ENCODE measurements at regions of chr19 and their contacts with region 1.

Region 1: DNA sequence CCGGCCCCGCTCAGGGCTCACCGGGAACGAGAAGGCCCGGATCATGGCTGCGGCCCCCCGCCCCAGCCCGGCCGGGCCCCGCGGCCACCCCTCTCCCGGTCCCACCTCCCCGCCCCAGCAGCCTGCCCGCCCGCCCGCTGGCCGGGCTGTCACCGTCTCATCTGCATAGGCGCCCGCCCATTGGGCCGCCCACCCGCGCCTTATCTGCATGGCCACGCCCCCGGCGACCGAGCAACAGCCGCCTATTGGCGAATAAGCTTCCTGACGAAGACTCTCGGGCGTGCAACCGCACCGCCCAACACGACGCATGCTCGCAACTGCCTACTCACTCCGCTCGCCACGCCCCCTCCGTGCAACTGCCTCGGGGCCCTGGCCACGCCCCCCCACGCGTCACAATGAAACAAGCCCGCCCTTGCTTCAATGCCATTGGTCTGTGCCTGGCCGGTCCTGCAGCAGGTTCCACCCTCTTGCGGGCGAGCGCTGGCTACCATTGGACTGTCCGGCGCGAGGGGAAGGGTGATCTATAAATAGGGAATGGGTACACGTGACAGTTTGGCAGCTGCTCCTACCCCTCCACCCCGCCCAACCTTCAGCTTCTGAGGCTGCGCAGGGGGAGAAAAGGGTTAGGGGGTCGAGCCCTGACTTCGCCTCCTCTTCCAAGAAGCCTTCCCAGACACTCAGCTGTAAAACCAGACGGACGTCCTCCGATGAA is at the start of gene DACT3:
- DNase-seq: peak; percentile 96
- H3K4me3 ChIP-seq: peak within 1 kb of the TSS; percentile 69 to 88
- H3K27ac ChIP-seq: peak within 1 kb of the TSS; percentile 52 to 84; a peak in 3 of 4 replicates
- H3K4me1 ChIP-seq: peaks cover 0 to 18% of the 10 kb centered on the region in 2 experiments; a peak in 1 of 4 replicates
- H3K27me3 ChIP-seq: no peaks in the 10 kb centered on the region
- CTCF ChIP-seq: no peak
- EP300 ChIP-seq: no peak
- RAD21 ChIP-seq: no peak
- polyA plus RNA-seq, gene DACT3: 9.5 and 10.6 TPM in 2 replicates

Region 2: DNA sequence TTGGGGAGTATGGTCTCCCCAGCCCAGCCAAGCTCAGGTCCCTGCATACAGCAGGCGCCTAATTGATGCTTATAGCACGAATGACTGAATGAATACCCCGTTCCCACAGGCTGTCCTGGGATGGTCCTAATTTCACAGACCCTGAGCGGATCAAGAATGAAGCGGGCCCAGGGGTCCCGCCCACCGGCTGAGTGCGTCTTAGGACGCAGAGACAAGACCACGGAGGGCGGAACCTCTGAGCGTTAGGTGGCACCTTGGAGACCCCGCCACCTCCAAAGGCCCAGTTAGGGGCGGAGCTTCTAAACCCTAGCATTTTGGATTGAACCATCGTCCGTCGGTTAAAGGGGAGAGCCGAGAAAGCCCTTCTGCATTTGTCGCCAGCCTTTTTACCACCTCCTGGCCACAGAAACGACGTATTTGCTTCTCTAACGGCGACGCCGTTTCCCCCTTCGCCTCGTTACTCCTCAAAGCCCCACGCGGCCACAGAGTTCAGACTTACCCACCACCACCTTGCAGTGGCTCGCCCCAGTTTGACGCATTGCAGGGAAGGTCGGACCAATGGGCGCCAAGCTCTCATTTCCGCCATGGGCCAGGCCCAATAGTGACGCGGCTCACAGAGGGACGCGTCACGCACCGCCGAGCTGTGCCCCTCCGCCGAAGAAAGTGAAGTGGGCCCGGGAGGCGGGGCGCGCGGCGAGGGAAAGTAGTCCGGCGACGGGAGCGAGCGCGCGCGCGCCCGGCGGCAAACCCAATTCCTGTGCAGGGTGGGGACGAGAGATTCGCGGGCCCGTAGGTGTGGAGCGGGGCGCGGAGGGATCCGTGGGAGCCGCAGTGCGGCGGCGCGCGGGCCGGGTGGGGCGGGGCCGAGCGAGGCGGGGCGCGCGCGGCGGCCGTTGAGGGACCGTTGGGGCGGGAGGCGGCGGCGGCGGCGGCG is 60.5 kb before region 1 on chr19:
- CTCF ChIA-PET with region 1: interaction called, 471 read pairs
- POLR2A ChIA-PET with region 1: interaction called, 8 read pairs
- DNase-seq: peak; percentile 96
- H3K4me3 ChIP-seq: peak overlapping the region; percentile 98 to 100
- H3K27ac ChIP-seq: peak overlapping the region; percentile 94 to 100
- H3K4me1 ChIP-seq: peaks cover 19 to 31% of the 10 kb centered on the region in 2 experiments
- H3K27me3 ChIP-seq: no peaks in the 10 kb centered on the region
- CTCF ChIP-seq: no peak
- EP300 ChIP-seq: peak in 1 of 2 experiments; percentile 65; a peak in 1 of 4 replicates
- RAD21 ChIP-seq: no peak

Region 3: GRCh38 chr19:46624958-46625661 is 36.1 kb before region 1 on chr19 and contains the start of gene PTGIR:
- CTCF ChIA-PET with region 1: interaction called, 471 read pairs
- POLR2A ChIA-PET with region 1: interaction called, 31 read pairs
- DNase-seq: peak; percentile 43
- H3K4me3 ChIP-seq: peak within 1 kb of the TSS in 1 of 2 experiments; percentile 52; a peak in 1 of 4 replicates
- H3K27ac ChIP-seq: peak within 1 kb of the TSS; percentile 75 to 97
- H3K4me1 ChIP-seq: peaks cover 16 to 71% of the 10 kb centered on the region in 2 experiments
- H3K27me3 ChIP-seq: no peaks in the 10 kb centered on the region
- CTCF ChIP-seq: no peak
- EP300 ChIP-seq: no peak
- RAD21 ChIP-seq: no peak
- polyA plus RNA-seq, gene PTGIR: 2.5 and 3.3 TPM in 2 replicates

Region 4: GRCh38 chr19:46639358-46640182 is 21.6 kb before region 1 on chr19:
- CTCF ChIA-PET with region 1: interaction called, 106 read pairs
- POLR2A ChIA-PET with region 1: interaction called, 26 read pairs
- DNase-seq: peak; percentile 94
- H3K4me3 ChIP-seq: peak overlapping the region; percentile 42 to 73
- H3K27ac ChIP-seq: peak overlapping the region; percentile 78 to 97
- H3K4me1 ChIP-seq: peaks cover 7 to 25% of the 10 kb centered on the region in 2 experiments; a peak in 2 of 4 replicates
- H3K27me3 ChIP-seq: no peaks in the 10 kb centered on the region
- CTCF ChIP-seq: no peak
- EP300 ChIP-seq: peak; percentile 39 to 72; a peak in 3 of 4 replicates
- RAD21 ChIP-seq: peak; percentile 10; the same call in 1 of the 2 replicates

Region 5: DNA sequence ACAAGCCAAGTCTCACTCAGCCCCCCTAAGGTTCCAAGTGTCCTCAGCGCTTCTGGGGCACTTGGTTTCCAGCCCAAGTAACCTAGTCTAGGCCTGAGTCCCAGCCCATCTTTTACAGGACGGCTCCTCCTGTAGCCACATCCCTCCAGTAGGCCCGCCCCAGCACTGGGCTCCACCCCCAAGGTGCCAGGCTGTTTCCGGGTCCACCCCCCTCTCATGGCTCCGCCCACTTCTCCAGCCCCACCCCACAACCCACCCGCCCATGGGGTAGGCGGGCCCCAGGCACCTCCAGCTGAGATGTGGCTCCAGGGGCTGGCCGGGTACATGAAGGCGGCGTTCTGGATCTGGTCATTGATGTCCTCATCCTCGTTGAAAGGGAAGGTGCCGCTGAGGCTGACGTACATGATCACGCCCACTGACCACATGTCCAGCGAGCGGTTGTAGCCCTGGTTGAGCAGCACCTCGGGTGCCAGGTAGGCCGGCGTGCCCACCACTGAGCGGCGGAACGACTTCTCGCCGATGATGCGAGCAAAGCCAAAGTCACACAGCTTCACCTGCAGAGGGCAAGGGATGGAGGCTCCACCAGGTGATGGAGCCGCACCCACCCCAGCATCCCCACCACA is 17.0 kb after region 1 on chr19:
- CTCF ChIA-PET with region 1: interaction called, 24 read pairs
- POLR2A ChIA-PET with region 1: no interaction called
- DNase-seq: peak; percentile 89
- H3K4me3 ChIP-seq: no peak overlapping the region
- H3K27ac ChIP-seq: no peak overlapping the region
- H3K4me1 ChIP-seq: no peaks in the 10 kb centered on the region
- H3K27me3 ChIP-seq: no peaks in the 10 kb centered on the region
- CTCF ChIP-seq: no peak
- EP300 ChIP-seq: no peak
- RAD21 ChIP-seq: no peak

Region 6: DNA sequence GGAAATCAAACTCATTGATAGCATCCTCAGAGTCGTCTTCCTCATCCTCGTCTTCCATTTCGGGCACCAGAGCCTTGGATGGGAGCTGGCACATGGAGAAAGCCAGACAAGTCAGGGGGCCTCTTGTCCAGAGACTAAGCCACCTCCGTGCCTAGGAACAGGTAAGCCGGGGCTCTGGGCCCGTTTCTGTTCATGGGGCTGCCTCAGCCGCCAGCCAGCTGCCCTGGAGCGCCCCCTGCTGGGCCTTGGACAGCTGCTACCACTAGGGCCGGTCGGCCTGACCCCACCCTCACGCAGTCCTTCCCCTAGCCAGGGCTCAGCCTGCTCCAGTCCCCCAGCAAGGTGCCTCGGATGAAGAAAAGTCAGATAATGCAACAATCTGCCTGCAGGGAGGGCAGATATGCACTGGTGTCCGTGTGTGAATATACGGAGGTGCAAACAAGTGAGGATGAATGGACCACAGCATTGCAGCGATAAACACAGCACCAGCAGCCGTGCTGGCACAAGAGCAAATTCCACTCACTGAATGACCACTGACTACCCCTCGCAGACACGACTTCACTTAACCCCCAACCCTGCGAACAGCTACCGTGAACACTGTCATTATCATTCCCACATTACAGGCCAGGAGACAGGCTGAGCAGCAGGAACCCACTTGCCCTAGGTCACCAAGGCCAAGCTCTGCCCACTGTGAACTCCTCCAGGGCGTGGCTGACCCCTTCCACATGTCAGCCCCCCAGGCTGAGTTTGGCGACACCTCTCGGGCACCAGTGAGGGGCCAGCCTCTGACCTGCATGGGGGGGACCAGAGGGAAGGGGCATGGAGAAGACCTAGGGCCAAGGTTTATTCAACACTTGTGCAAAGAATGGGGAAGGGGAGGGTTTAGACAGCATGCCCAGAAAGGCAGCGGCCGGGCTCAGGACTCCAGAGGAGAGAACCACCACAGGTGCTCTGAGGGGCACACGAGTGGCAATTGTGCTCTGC is 67.8 kb after region 1 on chr19:
- CTCF ChIA-PET with region 1: interaction called, 32 read pairs
- POLR2A ChIA-PET with region 1: no interaction called
- DNase-seq: peak; percentile 95
- H3K4me3 ChIP-seq: no peak overlapping the region; a peak in 1 of 4 replicates
- H3K27ac ChIP-seq: no peak overlapping the region; a peak in 1 of 4 replicates
- H3K4me1 ChIP-seq: peaks cover 3 to 10% of the 10 kb centered on the region in 2 experiments; a peak in 2 of 4 replicates
- H3K27me3 ChIP-seq: no peaks in the 10 kb centered on the region
- CTCF ChIP-seq: peak; percentile 94
- EP300 ChIP-seq: no peak
- RAD21 ChIP-seq: peak; percentile 74